ENCODE measurements at regions of chr9 and their contacts with region 1.

Region 1: DNA sequence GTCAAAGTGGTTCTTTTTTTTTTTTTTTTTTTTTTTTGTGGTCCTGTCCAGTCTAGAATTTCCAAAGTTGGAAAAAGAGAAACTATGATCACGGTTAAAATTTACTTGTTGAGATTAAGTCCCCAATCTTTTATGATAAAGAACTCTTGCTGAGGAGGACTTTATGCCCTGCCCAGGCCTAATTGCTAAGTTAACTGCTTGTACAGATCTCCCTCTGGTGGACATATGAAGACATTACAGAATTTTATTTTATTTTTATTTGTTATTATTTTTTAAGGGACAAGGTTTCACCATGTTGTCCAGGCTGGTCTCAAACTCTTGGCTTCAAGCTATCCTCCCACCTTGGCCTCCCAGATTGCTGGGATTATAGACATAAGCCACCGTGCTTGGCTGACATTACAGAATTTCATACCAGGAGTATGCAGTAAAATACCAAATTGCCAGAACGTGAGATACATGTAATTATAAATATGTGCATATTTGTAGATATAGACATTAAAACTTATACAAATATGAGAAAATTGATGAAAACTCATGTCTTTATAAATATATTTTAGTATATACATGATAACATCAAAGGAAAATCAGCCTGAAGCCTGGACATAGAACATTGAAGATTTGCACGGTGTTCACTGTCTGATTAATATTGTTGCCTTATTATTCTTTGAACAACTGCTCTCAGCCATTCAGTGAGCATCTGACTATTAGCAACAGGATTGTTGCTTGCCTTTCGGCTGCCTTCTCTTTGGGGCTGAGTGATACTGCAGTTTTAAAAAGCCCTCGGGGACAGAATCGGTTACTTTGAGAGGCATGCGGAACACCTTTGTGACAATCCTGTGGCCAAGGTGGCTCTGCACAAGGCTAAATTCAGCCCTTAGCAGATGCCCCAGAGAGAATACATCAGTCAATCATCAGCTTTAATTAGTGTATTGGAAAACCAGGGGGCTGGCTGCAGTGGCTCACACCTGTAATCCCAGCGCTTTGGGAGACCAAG is 91.0 kb downstream of the RFK start:
- DNase-seq: peak; percentile 31
- ATAC-seq: peak; percentile 49
- H3K4me3 ChIP-seq: no peak overlapping the region
- H3K4me3 Mint-ChIP-seq: no peak overlapping the region
- H3K27ac ChIP-seq: no peak overlapping the region
- H3K27ac Mint-ChIP-seq: no peak overlapping the region
- H3K4me1 ChIP-seq: no peaks in the 10 kb centered on the region
- H3K4me1 Mint-ChIP-seq: no peaks in the 10 kb centered on the region
- H3K27me3 ChIP-seq: no peaks in the 10 kb centered on the region
- H3K27me3 Mint-ChIP-seq: peaks cover 18% of the 10 kb centered on the region
- CTCF ChIP-seq: peak; percentile 80

Region 2: GRCh38 chr9:75539523-75539922 is 763.7 kb before region 1 on chr9:
- CTCF ChIA-PET with region 1: no interaction called
- POLR2A ChIA-PET with region 1: no interaction called
- intact Hi-C with region 1: no loop called
- DNase-seq: no peak
- ATAC-seq: no peak
- H3K4me3 ChIP-seq: no peak overlapping the region
- H3K4me3 Mint-ChIP-seq: no peak overlapping the region
- H3K27ac ChIP-seq: no peak overlapping the region
- H3K27ac Mint-ChIP-seq: no peak overlapping the region
- H3K4me1 ChIP-seq: no peaks in the 10 kb centered on the region
- H3K4me1 Mint-ChIP-seq: no peaks in the 10 kb centered on the region
- H3K27me3 ChIP-seq: no peaks in the 10 kb centered on the region
- H3K27me3 Mint-ChIP-seq: no peaks in the 10 kb centered on the region
- CTCF ChIP-seq: no peak

Region 3: DNA sequence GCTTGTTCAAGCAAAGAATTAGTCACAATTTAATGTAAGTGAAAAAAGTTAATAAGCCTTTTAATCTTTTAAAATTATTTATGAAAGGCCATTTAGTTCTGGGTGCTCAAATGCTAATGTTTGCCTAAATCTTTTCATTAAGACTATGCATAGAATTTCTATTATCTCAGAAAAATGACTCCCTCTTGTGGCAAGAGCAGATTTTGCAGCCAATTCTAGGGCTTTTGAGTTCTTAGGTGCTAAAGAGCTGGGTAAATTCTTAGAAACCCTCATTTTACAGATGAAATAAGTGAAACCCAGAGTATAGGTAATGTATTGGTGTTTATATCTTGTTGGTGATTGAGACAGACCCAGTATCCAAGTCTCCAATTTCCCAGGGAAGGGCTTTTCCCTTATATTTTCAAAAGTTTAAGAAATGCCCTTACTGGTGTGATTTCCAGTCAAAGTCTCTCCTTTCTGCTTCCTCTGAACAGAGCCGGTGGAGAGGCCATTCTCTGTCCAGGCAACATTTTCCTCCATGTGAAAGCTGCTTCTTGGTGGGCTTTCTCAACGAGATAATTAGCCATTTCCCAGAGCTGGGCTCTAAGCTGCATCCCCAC is 436.9 kb before region 1 on chr9:
- CTCF ChIA-PET with region 1: no interaction called
- POLR2A ChIA-PET with region 1: no interaction called
- intact Hi-C with region 1: loop called (anchors 10 kb)
- DNase-seq: peak; percentile 23
- ATAC-seq: no peak
- H3K4me3 ChIP-seq: no peak overlapping the region
- H3K4me3 Mint-ChIP-seq: no peak overlapping the region
- H3K27ac ChIP-seq: no peak overlapping the region
- H3K27ac Mint-ChIP-seq: no peak overlapping the region
- H3K4me1 ChIP-seq: no peaks in the 10 kb centered on the region
- H3K4me1 Mint-ChIP-seq: no peaks in the 10 kb centered on the region
- H3K27me3 ChIP-seq: no peaks in the 10 kb centered on the region
- H3K27me3 Mint-ChIP-seq: peaks cover 7% of the 10 kb centered on the region
- CTCF ChIP-seq: peak; percentile 86

Region 4: DNA sequence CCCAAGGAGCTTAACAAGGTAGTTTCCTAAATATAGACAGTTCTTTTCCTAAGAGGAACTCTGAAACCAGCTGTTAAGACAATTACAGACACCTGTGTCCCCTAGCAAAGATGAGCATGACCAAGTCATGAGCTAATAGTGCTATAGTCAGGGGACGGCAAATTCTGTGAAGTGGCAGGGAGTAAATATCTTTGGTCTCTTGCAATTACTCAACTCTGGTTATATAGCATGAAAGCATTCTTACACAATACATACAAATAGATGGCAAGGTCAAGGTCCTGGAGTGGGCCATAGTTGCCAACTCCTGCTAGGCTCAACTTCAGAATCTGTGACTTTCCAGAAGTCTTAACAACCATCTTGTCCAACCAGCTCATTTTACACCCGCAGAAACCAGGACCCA is 12.7 kb before region 1 on chr9:
- CTCF ChIA-PET with region 1: interaction called, 10 read pairs
- POLR2A ChIA-PET with region 1: no interaction called
- intact Hi-C with region 1: no loop called
- DNase-seq: no peak
- ATAC-seq: no peak
- H3K4me3 ChIP-seq: no peak overlapping the region
- H3K4me3 Mint-ChIP-seq: no peak overlapping the region
- H3K27ac ChIP-seq: no peak overlapping the region
- H3K27ac Mint-ChIP-seq: no peak overlapping the region
- H3K4me1 ChIP-seq: no peaks in the 10 kb centered on the region
- H3K4me1 Mint-ChIP-seq: peaks cover 6% of the 10 kb centered on the region
- H3K27me3 ChIP-seq: no peaks in the 10 kb centered on the region
- H3K27me3 Mint-ChIP-seq: no peaks in the 10 kb centered on the region
- CTCF ChIP-seq: no peak

Region 5: GRCh38 chr9:76316069-76316468 is 12.8 kb after region 1 on chr9:
- CTCF ChIA-PET with region 1: interaction called, 13 read pairs
- POLR2A ChIA-PET with region 1: no interaction called
- intact Hi-C with region 1: no loop called
- DNase-seq: no peak
- ATAC-seq: no peak
- H3K4me3 ChIP-seq: no peak overlapping the region
- H3K4me3 Mint-ChIP-seq: no peak overlapping the region
- H3K27ac ChIP-seq: no peak overlapping the region
- H3K27ac Mint-ChIP-seq: no peak overlapping the region
- H3K4me1 ChIP-seq: no peaks in the 10 kb centered on the region
- H3K4me1 Mint-ChIP-seq: no peaks in the 10 kb centered on the region
- H3K27me3 ChIP-seq: no peaks in the 10 kb centered on the region
- H3K27me3 Mint-ChIP-seq: peaks cover 7% of the 10 kb centered on the region
- CTCF ChIP-seq: no peak

Measured in B cell (primary cell).